HCT116 (cell line): ENCODE measurements at regions of chr6 and their contacts with region 1.

Region 1: GRCh38 chr6:49423817-49424216 is 39.2 kb downstream of the MMUT start:
- DNase-seq: no peak
- ATAC-seq: no peak
- H3K4me3 ChIP-seq: no peak overlapping the region
- H3K27ac ChIP-seq: no peak overlapping the region
- H3K4me1 ChIP-seq: no peaks in the 10 kb centered on the region
- H3K27me3 ChIP-seq: no peaks in the 10 kb centered on the region
- CTCF ChIP-seq: peak; percentile 9 to 49 (median 31); a peak in 3 of 6 replicates
- POLR2A ChIP-seq: no peak
- RAD21 ChIP-seq: peak; percentile 65

Region 2: GRCh38 chr6:48087448-48087847 is 1336.4 kb before region 1 on chr6:
- CTCF ChIA-PET with region 1: no interaction called
- POLR2A ChIA-PET with region 1: no interaction called
- RAD21 ChIA-PET with region 1: no interaction called
- intact Hi-C with region 1: loop called (anchors 5 kb)
- DNase-seq: peak; percentile 18
- ATAC-seq: no peak
- H3K4me3 ChIP-seq: no peak overlapping the region
- H3K27ac ChIP-seq: no peak overlapping the region
- H3K4me1 ChIP-seq: no peaks in the 10 kb centered on the region
- H3K27me3 ChIP-seq: no peaks in the 10 kb centered on the region
- CTCF ChIP-seq: peak; percentile 25 to 50 (median 48); a peak in 4 of 6 replicates
- POLR2A ChIP-seq: no peak
- RAD21 ChIP-seq: peak; percentile 70

Region 3: GRCh38 chr6:48765352-48765961 is 658.4 kb before region 1 on chr6:
- CTCF ChIA-PET with region 1: no interaction called
- POLR2A ChIA-PET with region 1: no interaction called
- RAD21 ChIA-PET with region 1: no interaction called
- intact Hi-C with region 1: loop called (anchors 5 kb)
- DNase-seq: peak; percentile 59
- ATAC-seq: peak; percentile 87
- H3K4me3 ChIP-seq: no peak overlapping the region
- H3K27ac ChIP-seq: no peak overlapping the region; the same call in 1 of the 2 replicates
- H3K4me1 ChIP-seq: peaks cover 5 to 22% of the 10 kb centered on the region in 2 experiments; a peak in 3 of 4 replicates
- H3K27me3 ChIP-seq: no peaks in the 10 kb centered on the region
- CTCF ChIP-seq: peak; percentile 56 to 73 (median 66)
- POLR2A ChIP-seq: no peak
- RAD21 ChIP-seq: peak; percentile 86

Region 4: GRCh38 chr6:49409951-49410542 is 13.8 kb before region 1 on chr6:
- CTCF ChIA-PET with region 1: interaction called, 12 read pairs
- POLR2A ChIA-PET with region 1: no interaction called
- RAD21 ChIA-PET with region 1: no interaction called
- intact Hi-C with region 1: no loop called
- DNase-seq: peak; percentile 54
- ATAC-seq: peak; percentile 89
- H3K4me3 ChIP-seq: no peak overlapping the region
- H3K27ac ChIP-seq: no peak overlapping the region
- H3K4me1 ChIP-seq: no peaks in the 10 kb centered on the region
- H3K27me3 ChIP-seq: no peaks in the 10 kb centered on the region
- CTCF ChIP-seq: peak; percentile 54 to 86 (median 84); a peak in 5 of 6 replicates
- POLR2A ChIP-seq: no peak
- RAD21 ChIP-seq: peak; percentile 82